Activated CD4-positive, alpha-beta T cell treated with anti-CD3 and anti-CD28 coated beads for 36 hours (primary cell): ENCODE measurements at regions of chr2 and their contacts with region 1.

Region 1: DNA sequence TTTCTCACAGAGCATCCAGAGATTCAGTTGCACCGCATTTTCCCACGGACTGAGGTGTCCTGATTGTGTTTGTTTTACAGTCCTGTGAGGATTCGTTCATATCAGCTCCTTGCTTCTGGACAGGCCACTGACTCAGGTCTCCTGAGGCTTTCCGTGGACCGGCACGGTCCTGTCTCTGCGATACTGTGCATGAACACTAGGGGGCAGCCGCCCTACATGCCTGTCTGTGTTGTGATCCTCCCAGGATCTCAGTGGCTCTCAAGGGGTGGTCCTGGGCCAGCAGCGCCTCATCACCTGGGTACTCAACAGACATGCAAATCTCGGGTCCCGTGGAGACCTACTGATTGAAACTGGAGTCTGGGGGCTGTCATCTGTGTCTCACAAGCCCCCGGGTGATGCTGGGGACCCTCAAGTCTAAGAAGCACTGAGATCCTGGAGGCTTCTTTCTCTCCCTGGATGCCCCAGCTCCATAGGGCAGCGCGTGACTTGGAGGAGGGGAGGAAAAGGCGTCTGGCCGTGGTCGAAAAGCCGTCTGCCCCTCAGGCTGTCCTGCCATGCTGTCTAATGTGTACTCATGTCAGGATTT is 28.9 kb downstream of the IL1R2 start:
- DNase-seq: peak; percentile 92
- ATAC-seq: peak; percentile 84
- H3K4me3 Mint-ChIP-seq: no peak overlapping the region
- H3K27ac Mint-ChIP-seq: peak overlapping the region; percentile 68
- H3K4me1 Mint-ChIP-seq: peaks cover 53% of the 10 kb centered on the region
- H3K27me3 Mint-ChIP-seq: peaks cover 2% of the 10 kb centered on the region

Region 2: GRCh38 chr2:102005989-102006885 is 14.5 kb before region 1 on chr2:
- CTCF ChIA-PET with region 1: interaction called, 25 read pairs
- POLR2A ChIA-PET with region 1: interaction called, 3 read pairs
- intact Hi-C with region 1: loop called (anchors 2 kb)
- DNase-seq: peak; percentile 67
- ATAC-seq: peak; percentile 27
- H3K4me3 Mint-ChIP-seq: peak overlapping the region; percentile 5
- H3K27ac Mint-ChIP-seq: peak overlapping the region; percentile 77
- H3K4me1 Mint-ChIP-seq: peaks cover 16% of the 10 kb centered on the region
- H3K27me3 Mint-ChIP-seq: no peaks in the 10 kb centered on the region

Region 3: GRCh38 chr2:102082571-102083392 is 62.1 kb after region 1 on chr2:
- CTCF ChIA-PET with region 1: interaction called, 15 read pairs
- POLR2A ChIA-PET with region 1: no interaction called
- intact Hi-C with region 1: loop called (anchors 2 kb)
- DNase-seq: peak; percentile 74
- ATAC-seq: peak; percentile 90
- H3K4me3 Mint-ChIP-seq: peak overlapping the region; percentile 50
- H3K27ac Mint-ChIP-seq: peak overlapping the region; percentile 93
- H3K4me1 Mint-ChIP-seq: peaks cover 74% of the 10 kb centered on the region
- H3K27me3 Mint-ChIP-seq: no peaks in the 10 kb centered on the region

Region 4: DNA sequence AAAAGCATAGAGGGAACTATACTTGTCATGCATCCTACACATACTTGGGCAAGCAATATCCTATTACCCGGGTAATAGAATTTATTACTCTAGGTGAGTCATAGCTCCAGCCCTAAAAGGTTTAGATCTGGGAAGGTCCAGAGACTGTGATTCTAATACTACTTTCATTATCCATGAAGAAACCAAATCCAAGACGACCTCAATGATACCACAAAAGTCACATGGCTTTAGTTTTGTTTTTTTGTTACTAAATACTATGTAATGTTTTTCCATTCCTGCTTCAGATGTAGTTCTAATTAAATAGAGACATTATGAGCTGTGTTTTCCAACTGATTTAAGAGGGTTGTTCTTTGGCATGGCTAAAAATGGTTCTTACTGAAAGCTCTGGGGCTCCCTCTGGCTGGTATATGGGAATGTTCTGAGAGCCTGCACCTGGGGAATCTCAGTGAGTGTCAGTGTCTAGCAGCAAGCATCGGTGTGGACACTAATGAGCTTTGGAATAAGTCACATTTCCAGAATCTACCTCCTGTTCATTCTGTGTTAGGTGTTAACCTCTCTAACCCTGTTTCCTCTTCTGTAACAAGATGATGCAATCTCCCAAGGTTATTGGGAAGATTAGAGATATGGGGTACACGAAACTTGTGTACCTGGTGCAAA is 145.6 kb after region 1 on chr2:
- CTCF ChIA-PET with region 1: interaction called, 6 read pairs
- POLR2A ChIA-PET with region 1: no interaction called
- intact Hi-C with region 1: loop called (anchors 1 kb)
- DNase-seq: no peak
- ATAC-seq: peak; percentile 47
- H3K4me3 Mint-ChIP-seq: no peak overlapping the region
- H3K27ac Mint-ChIP-seq: no peak overlapping the region
- H3K4me1 Mint-ChIP-seq: peaks cover 9% of the 10 kb centered on the region
- H3K27me3 Mint-ChIP-seq: no peaks in the 10 kb centered on the region

Region 5: DNA sequence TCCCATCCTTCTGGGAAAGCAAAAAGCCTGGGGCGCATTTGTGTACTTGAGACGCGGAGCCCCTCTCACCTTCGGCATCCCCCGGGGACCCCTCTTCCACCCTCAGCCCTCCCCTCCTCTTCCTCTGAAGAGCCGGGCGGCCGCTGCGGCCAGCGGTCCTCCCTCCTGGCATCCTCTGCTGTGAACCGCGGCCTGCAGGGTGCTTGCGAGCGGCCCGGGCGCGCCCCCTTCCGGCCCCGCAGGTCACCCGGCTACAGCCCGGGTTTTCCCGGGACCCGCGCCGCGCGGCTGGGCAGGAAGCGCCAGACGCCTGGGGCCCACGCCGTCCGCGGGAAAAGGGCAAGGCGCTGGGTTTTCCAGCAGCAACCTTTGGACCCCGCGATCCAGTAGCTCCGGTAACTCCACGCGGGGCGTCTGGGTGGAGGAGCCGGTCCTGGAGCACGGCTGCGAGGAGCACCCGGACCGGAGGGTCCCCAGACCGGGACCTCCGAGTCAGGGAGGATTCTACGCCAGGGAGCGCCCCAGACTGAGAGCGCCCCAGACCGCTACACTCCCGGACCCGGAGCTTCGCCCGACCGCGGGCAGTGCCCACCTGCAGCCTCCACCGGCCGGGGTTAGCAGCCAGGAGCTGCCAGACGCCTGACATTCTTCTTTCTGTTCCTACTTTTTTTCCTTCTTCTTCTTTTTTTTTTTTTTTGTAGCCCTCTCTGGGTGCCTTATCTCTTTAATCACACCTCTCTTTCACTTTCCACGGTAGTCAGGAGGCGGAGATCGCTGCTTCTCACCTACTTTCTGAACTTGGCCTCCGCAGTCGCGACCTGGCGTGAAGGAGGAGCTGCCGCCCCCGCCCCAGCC is 335.1 kb after region 1 on chr2 and contains the start of gene IL18R1:
- CTCF ChIA-PET with region 1: no interaction called
- POLR2A ChIA-PET with region 1: no interaction called
- intact Hi-C with region 1: loop called (anchors 1 to 5 kb)
- DNase-seq: peak; percentile 85
- ATAC-seq: peak; percentile 86
- H3K4me3 Mint-ChIP-seq: peak within 1 kb of the TSS; percentile 100
- H3K27ac Mint-ChIP-seq: peak within 1 kb of the TSS; percentile 99
- H3K4me1 Mint-ChIP-seq: peaks cover 36% of the 10 kb centered on the region
- H3K27me3 Mint-ChIP-seq: no peaks in the 10 kb centered on the region
- total RNA-seq, gene IL18R1: 22.4 to 23.4 TPM

Region 6: DNA sequence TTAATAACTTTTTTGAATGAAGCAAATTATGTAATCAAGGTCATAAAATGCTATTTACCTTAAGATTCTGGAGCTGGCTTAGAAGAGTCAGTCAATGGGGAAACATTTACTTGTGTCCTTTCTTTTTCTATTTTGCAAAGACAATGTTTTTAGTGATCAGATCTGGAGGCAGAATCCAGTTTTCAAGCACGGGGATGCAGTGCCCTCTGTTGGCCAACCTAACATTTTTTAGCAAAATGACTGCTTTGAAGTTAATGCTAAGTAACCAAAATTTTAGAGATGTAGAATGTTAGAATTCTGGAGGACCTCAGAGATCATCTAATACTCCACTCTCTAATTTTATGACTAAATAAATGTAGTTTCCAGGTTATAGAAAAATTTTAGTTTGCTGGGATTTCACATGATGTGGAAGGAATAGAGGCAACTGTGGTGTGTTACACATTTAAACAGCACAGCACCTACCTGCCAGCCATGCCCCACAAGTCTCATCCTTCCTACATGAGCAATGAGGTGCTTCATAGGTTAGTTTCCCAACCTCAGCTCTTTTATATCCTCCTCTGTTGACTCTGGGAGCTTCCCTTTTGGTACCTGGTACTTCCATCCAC is 428.8 kb after region 1 on chr2:
- CTCF ChIA-PET with region 1: no interaction called
- POLR2A ChIA-PET with region 1: no interaction called
- intact Hi-C with region 1: loop called in 1 of 2 experiments (anchors 1 kb)
- DNase-seq: peak; percentile 85
- ATAC-seq: peak; percentile 58
- H3K4me3 Mint-ChIP-seq: no peak overlapping the region
- H3K27ac Mint-ChIP-seq: no peak overlapping the region
- H3K4me1 Mint-ChIP-seq: peaks cover 6% of the 10 kb centered on the region
- H3K27me3 Mint-ChIP-seq: no peaks in the 10 kb centered on the region

Region 7: DNA sequence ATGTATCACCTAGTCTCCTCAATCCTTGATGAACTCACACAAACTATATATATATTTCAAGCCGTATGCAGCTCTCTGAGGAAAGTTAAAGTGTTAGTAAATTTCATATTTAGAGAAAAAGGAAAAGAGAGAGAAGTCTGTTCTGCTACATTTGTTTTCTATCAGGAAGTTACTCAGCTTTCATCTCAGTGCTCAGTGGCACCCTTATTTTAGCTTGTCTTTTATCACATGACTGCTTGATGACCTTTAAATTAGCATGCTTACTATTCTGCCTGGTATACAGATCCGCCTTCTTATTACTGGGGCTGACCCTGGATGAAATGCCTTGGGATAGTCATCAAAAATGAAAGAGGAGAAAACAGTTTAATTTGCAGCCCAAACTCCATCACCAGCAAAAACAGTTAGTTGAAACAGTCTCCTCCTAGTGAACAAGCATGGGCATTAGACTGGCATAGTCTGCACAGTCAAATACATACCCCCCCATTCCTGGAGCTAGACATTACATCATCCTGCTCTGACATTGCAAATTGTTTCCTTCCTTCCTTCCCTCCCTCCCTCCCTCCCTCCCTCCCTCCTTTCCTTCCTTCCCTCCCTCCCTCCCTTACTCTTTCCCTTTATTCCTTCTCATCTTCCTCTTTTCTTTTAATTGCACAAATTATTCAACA is 956.9 kb after region 1 on chr2:
- CTCF ChIA-PET with region 1: no interaction called
- POLR2A ChIA-PET with region 1: no interaction called
- intact Hi-C with region 1: no loop called
- DNase-seq: no peak
- ATAC-seq: no peak
- H3K4me3 Mint-ChIP-seq: no peak overlapping the region
- H3K27ac Mint-ChIP-seq: no peak overlapping the region
- H3K4me1 Mint-ChIP-seq: no peaks in the 10 kb centered on the region
- H3K27me3 Mint-ChIP-seq: peaks cover 5% of the 10 kb centered on the region